Caco-2 (cell line): ENCODE measurements at regions of chr7 and their contacts with region 1.

Region 1: DNA sequence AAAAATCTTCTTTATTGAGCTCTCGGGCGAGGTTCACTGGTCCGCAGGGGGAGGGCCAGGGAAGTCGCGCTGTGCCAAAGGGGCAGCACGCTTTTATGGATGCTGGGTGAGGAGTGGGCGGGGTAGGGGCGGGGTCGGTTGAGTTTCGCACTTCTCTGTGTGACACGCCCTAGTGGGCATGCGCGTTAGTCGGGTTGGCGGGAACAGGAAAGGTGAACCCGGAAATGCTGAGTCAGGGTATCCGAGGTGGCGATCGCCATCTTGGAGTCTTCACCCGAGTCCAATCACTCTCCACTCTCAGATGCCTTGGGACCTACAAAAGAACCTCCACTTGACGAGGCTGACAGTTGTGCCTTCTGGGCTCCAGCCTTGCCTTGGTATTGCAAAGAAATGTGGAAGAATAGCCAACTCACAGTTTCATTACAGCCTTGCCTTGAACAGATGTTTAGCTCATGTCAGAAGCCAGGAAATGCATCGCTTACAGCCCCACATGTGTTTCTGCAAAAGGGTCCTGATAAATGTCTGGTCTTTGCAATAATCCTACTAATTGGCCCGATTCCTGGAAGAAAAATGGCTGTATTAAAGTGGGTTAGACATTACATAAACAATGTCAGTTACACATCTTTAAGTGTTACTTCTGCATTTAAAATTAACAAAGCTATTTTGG is 64.1 kb downstream of the AHR start:
- DNase-seq: no peak
- H3K4me3 ChIP-seq: no peak overlapping the region
- H3K4me3 Mint-ChIP-seq: no peak overlapping the region
- H3K27ac Mint-ChIP-seq: no peak overlapping the region
- H3K4me1 ChIP-seq: 0 out of 2 replicates have a peak, but pooled peaks cover 3% of the 10 kb centered on the region
- H3K4me1 Mint-ChIP-seq: no peaks in the 10 kb centered on the region
- H3K27me3 ChIP-seq: no peaks in the 10 kb centered on the region
- H3K27me3 Mint-ChIP-seq: no peaks in the 10 kb centered on the region
- CTCF ChIP-seq: no peak

Region 2: GRCh38 chr7:16851829-16852228 is 510.7 kb before region 1 on chr7:
- CTCF ChIA-PET with region 1: no interaction called
- POLR2A ChIA-PET with region 1: no interaction called
- intact Hi-C with region 1: no loop called
- DNase-seq: no peak
- H3K4me3 ChIP-seq: no peak overlapping the region
- H3K4me3 Mint-ChIP-seq: no peak overlapping the region
- H3K27ac Mint-ChIP-seq: peak overlapping the region; percentile 17
- H3K4me1 ChIP-seq: peaks cover 33% of the 10 kb centered on the region
- H3K4me1 Mint-ChIP-seq: peaks cover 19% of the 10 kb centered on the region
- H3K27me3 ChIP-seq: no peaks in the 10 kb centered on the region
- H3K27me3 Mint-ChIP-seq: no peaks in the 10 kb centered on the region
- CTCF ChIP-seq: no peak

Region 3: GRCh38 chr7:17640730-17641377 is 278.3 kb after region 1 on chr7:
- CTCF ChIA-PET with region 1: no interaction called
- POLR2A ChIA-PET with region 1: no interaction called
- intact Hi-C with region 1: loop called (anchors 10 kb)
- DNase-seq: peak in 1 of 2 experiments; percentile 50
- H3K4me3 ChIP-seq: no peak overlapping the region
- H3K4me3 Mint-ChIP-seq: no peak overlapping the region
- H3K27ac Mint-ChIP-seq: no peak overlapping the region
- H3K4me1 ChIP-seq: peaks cover 28% of the 10 kb centered on the region
- H3K4me1 Mint-ChIP-seq: peaks cover 31% of the 10 kb centered on the region
- H3K27me3 ChIP-seq: no peaks in the 10 kb centered on the region
- H3K27me3 Mint-ChIP-seq: no peaks in the 10 kb centered on the region
- CTCF ChIP-seq: peak; percentile 53 to 80